ENCODE measurements at regions of chr19 and their contacts with region 1.

Region 1: DNA sequence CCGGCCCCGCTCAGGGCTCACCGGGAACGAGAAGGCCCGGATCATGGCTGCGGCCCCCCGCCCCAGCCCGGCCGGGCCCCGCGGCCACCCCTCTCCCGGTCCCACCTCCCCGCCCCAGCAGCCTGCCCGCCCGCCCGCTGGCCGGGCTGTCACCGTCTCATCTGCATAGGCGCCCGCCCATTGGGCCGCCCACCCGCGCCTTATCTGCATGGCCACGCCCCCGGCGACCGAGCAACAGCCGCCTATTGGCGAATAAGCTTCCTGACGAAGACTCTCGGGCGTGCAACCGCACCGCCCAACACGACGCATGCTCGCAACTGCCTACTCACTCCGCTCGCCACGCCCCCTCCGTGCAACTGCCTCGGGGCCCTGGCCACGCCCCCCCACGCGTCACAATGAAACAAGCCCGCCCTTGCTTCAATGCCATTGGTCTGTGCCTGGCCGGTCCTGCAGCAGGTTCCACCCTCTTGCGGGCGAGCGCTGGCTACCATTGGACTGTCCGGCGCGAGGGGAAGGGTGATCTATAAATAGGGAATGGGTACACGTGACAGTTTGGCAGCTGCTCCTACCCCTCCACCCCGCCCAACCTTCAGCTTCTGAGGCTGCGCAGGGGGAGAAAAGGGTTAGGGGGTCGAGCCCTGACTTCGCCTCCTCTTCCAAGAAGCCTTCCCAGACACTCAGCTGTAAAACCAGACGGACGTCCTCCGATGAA is at the start of gene DACT3:
- DNase-seq: peak; percentile 100
- H3K4me3 ChIP-seq: peak within 1 kb of the TSS in 2 of 3 donors; percentile 18 to 47
- H3K27ac ChIP-seq: peak within 1 kb of the TSS; percentile 52 to 58 (median 55)
- H3K4me1 ChIP-seq: peaks cover 19 to 20% of the 10 kb centered on the region in 2 donors
- H3K27me3 ChIP-seq: no peaks in the 10 kb centered on the region
- CTCF ChIP-seq: no peak
- POLR2A ChIP-seq: no peak
- total RNA-seq, gene DACT3: 1.7 to 3.2 (median 2.7) TPM

Region 2: DNA sequence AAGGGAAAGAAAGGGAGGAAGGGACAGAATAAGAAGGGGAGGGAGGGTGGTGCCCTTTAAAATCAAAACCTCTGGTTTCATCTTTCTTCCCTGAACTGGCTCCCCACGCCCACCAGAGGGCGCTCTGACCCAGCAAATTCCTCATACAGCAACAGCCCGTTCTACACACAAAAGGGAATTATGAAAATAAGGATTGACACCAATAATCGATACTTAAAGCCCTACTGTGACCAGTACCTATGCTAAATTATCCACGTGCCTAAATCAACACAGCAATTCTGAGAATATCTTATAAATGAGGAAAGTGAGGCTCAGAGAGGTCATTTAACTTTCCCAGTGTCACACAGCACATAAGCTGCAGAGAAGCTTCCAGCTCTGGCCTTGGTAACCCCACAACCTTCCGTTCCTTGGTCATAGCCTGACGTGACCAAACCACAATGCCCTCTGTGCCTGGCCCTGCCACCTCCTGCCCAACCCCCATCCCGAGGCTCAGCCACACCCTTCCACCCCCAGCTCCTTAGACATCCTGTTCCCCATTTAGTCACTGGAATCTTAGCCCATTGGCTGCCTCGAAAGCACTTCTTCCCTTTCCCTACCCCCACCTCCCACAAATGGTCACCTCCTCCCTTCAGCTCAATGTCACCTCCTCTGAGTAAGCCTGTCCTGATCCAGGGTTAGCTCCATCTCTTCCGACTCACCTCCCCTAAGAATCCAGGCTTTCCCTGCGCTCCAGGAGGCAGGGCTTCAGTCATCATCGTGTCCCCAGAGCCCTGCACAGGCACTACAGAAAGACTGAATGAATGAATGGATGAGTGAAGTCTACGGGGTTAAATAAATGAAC is 131.3 kb before region 1 on chr19:
- intact Hi-C with region 1: loop called (anchors 5 kb)
- DNase-seq: peak; percentile 59 to 77
- H3K4me3 ChIP-seq: no peak overlapping the region
- H3K27ac ChIP-seq: no peak overlapping the region
- H3K4me1 ChIP-seq: peaks cover 0 to 12% of the 10 kb centered on the region in 2 donors
- H3K27me3 ChIP-seq: no peaks in the 10 kb centered on the region
- CTCF ChIP-seq: peak; percentile 85 to 92 (median 88)
- POLR2A ChIP-seq: no peak

Region 3: DNA sequence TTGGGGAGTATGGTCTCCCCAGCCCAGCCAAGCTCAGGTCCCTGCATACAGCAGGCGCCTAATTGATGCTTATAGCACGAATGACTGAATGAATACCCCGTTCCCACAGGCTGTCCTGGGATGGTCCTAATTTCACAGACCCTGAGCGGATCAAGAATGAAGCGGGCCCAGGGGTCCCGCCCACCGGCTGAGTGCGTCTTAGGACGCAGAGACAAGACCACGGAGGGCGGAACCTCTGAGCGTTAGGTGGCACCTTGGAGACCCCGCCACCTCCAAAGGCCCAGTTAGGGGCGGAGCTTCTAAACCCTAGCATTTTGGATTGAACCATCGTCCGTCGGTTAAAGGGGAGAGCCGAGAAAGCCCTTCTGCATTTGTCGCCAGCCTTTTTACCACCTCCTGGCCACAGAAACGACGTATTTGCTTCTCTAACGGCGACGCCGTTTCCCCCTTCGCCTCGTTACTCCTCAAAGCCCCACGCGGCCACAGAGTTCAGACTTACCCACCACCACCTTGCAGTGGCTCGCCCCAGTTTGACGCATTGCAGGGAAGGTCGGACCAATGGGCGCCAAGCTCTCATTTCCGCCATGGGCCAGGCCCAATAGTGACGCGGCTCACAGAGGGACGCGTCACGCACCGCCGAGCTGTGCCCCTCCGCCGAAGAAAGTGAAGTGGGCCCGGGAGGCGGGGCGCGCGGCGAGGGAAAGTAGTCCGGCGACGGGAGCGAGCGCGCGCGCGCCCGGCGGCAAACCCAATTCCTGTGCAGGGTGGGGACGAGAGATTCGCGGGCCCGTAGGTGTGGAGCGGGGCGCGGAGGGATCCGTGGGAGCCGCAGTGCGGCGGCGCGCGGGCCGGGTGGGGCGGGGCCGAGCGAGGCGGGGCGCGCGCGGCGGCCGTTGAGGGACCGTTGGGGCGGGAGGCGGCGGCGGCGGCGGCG is 60.5 kb before region 1 on chr19:
- intact Hi-C with region 1: loop called (anchors 5 kb)
- DNase-seq: peak; percentile 96 to 97
- H3K4me3 ChIP-seq: peak overlapping the region; percentile 16 to 97 (median 92)
- H3K27ac ChIP-seq: peak overlapping the region; percentile 95 to 99 (median 97)
- H3K4me1 ChIP-seq: peaks cover 27 to 37% of the 10 kb centered on the region in 2 donors
- H3K27me3 ChIP-seq: no peaks in the 10 kb centered on the region
- CTCF ChIP-seq: peak in 1 of 6 experiments; percentile 4
- POLR2A ChIP-seq: peak in 1 of 2 donors; percentile 59

Region 4: GRCh38 chr19:46614114-46614722 is 47.0 kb before region 1 on chr19:
- intact Hi-C with region 1: loop called (anchors 5 kb)
- DNase-seq: peak; percentile 81 to 83
- H3K4me3 ChIP-seq: no peak overlapping the region
- H3K27ac ChIP-seq: no peak overlapping the region
- H3K4me1 ChIP-seq: peaks cover 11 to 35% of the 10 kb centered on the region in 2 donors
- H3K27me3 ChIP-seq: no peaks in the 10 kb centered on the region
- CTCF ChIP-seq: peak; percentile 44 to 91 (median 74)
- POLR2A ChIP-seq: no peak

Measured in thyroid gland (tissue), 4 donors.